ENCODE measurements at regions of chr2 and their contacts with region 1.

Region 1: GRCh38 chr2:240560480-240561326 is 546 bp downstream of the DUSP28 start:
- DNase-seq: peak; percentile 94
- H3K4me3 ChIP-seq: peak overlapping the region; percentile 64 to 85
- H3K27ac ChIP-seq: peak overlapping the region; percentile 86 to 92
- H3K4me1 ChIP-seq: peaks cover 28 to 35% of the 10 kb centered on the region in 2 experiments
- H3K27me3 ChIP-seq: no peaks in the 10 kb centered on the region
- CTCF ChIP-seq: peak; percentile 39
- EP300 ChIP-seq: no peak
- RAD21 ChIP-seq: no peak

Region 2: GRCh38 chr2:240538031-240538780 is 22.5 kb before region 1 on chr2:
- CTCF ChIA-PET with region 1: no interaction called
- POLR2A ChIA-PET with region 1: no interaction called
- DNase-seq: no peak
- H3K4me3 ChIP-seq: no peak overlapping the region
- H3K27ac ChIP-seq: no peak overlapping the region
- H3K4me1 ChIP-seq: no peaks in the 10 kb centered on the region
- H3K27me3 ChIP-seq: no peaks in the 10 kb centered on the region
- CTCF ChIP-seq: no peak
- EP300 ChIP-seq: no peak
- RAD21 ChIP-seq: no peak

Region 3: DNA sequence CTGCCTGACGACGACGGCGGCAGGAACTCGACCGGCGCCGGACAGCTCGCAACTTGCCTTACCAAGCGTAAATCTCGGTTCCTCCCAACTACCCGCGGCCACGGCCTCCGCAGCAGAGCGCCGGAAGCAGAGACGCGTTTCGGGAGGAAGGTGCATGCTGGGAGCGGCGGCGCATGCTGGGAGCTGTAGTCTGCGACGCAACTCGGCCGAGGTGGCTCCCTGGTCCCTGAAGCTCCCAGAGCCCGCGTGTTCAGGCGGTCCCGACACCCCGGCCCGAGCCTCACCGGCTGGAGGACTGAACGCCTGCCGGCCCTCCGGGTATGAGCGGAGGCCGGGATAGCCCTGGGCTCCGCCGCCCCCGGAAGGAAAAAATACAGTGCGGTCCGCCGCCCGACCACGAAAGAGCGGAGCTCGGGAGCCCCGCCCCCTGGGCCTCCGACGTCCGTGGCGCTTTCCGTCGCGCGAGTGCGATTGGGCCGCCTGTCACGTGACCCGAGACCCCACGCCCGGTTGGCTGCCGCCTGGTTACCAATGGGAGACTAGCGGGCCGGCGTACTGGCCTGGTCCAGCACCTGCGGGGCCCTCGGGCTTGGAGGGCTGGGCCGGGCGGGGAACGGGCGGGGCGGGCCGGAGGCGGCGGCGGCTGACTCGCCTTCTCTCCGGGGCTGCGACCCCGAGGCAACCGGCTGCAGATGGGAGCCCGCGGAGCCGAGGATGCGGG is 25.7 kb after region 1 on chr2 and contains the start of gene CAPN10:
- CTCF ChIA-PET with region 1: interaction called, 31 read pairs
- POLR2A ChIA-PET with region 1: interaction called, 19 read pairs
- DNase-seq: peak; percentile 99
- H3K4me3 ChIP-seq: peak within 1 kb of the TSS; percentile 96 to 100
- H3K27ac ChIP-seq: peak within 1 kb of the TSS; percentile 82 to 94
- H3K4me1 ChIP-seq: peaks cover 17 to 28% of the 10 kb centered on the region in 2 experiments; a peak in 3 of 4 replicates
- H3K27me3 ChIP-seq: no peaks in the 10 kb centered on the region
- CTCF ChIP-seq: no peak
- EP300 ChIP-seq: no peak
- RAD21 ChIP-seq: no peak
- polyA plus RNA-seq, gene CAPN10: 24.0 and 28.1 TPM in 2 replicates

Region 4: GRCh38 chr2:240611601-240612210 is 51.0 kb after region 1 on chr2:
- CTCF ChIA-PET with region 1: no interaction called
- POLR2A ChIA-PET with region 1: no interaction called
- DNase-seq: no peak
- H3K4me3 ChIP-seq: no peak overlapping the region
- H3K27ac ChIP-seq: no peak overlapping the region
- H3K4me1 ChIP-seq: peaks cover 0 to 14% of the 10 kb centered on the region in 2 experiments; a peak in 2 of 4 replicates
- H3K27me3 ChIP-seq: no peaks in the 10 kb centered on the region
- CTCF ChIP-seq: no peak
- EP300 ChIP-seq: no peak
- RAD21 ChIP-seq: no peak

Measured in SK-N-SH (cell line).